GM12878 (cell line): ENCODE measurements at regions of chr11 and their contacts with region 1.

Region 1: GRCh38 chr11:120952461-120953434 is 71.2 kb upstream of the TBCEL start:
- DNase-seq: peak; percentile 26
- ATAC-seq: peak; percentile 91
- H3K4me3 ChIP-seq: no peak overlapping the region
- H3K27ac ChIP-seq: no peak overlapping the region
- H3K4me1 ChIP-seq: peaks cover 8% of the 10 kb centered on the region
- H3K27me3 ChIP-seq: no peaks in the 10 kb centered on the region; a peak in 1 of 4 replicates
- CTCF ChIP-seq: peak; percentile 80 to 96 (median 83)
- EP300 ChIP-seq: no peak
- POLR2A ChIP-seq: no peak
- RAD21 ChIP-seq: peak; percentile 97

Region 2: GRCh38 chr11:120523196-120523595 is 429.6 kb before region 1 on chr11:
- CTCF ChIA-PET with region 1: interaction called, 3 read pairs
- POLR2A ChIA-PET with region 1: no interaction called
- RAD21 ChIA-PET with region 1: no interaction called
- SMC1A ChIA-PET with region 1: no interaction called
- in situ Hi-C with region 1: loop called (anchors 5 kb)
- intact Hi-C with region 1: no loop called
- DNase-seq: no peak
- ATAC-seq: peak; percentile 51
- H3K4me3 ChIP-seq: no peak overlapping the region
- H3K27ac ChIP-seq: no peak overlapping the region
- H3K4me1 ChIP-seq: no peaks in the 10 kb centered on the region
- H3K27me3 ChIP-seq: peaks cover 0 to 1% of the 10 kb centered on the region in 2 experiments; a peak in 2 of 4 replicates
- CTCF ChIP-seq: no peak
- EP300 ChIP-seq: no peak
- POLR2A ChIP-seq: no peak
- RAD21 ChIP-seq: no peak

Region 3: GRCh38 chr11:120912504-120912903 is 40.2 kb before region 1 on chr11:
- CTCF ChIA-PET with region 1: interaction called, 24 read pairs
- POLR2A ChIA-PET with region 1: interaction called, 4 read pairs
- RAD21 ChIA-PET with region 1: no interaction called
- SMC1A ChIA-PET with region 1: interaction called, 8 read pairs
- in situ Hi-C with region 1: no loop called
- intact Hi-C with region 1: no loop called
- DNase-seq: no peak
- ATAC-seq: peak; percentile 51; the same call in 2 of the 3 replicates
- H3K4me3 ChIP-seq: no peak overlapping the region
- H3K27ac ChIP-seq: no peak overlapping the region
- H3K4me1 ChIP-seq: no peaks in the 10 kb centered on the region
- H3K27me3 ChIP-seq: no peaks in the 10 kb centered on the region
- CTCF ChIP-seq: peak; percentile 40 to 55 (median 47); a peak in 5 of 6 replicates
- EP300 ChIP-seq: no peak
- POLR2A ChIP-seq: no peak
- RAD21 ChIP-seq: peak; percentile 42

Region 4: DNA sequence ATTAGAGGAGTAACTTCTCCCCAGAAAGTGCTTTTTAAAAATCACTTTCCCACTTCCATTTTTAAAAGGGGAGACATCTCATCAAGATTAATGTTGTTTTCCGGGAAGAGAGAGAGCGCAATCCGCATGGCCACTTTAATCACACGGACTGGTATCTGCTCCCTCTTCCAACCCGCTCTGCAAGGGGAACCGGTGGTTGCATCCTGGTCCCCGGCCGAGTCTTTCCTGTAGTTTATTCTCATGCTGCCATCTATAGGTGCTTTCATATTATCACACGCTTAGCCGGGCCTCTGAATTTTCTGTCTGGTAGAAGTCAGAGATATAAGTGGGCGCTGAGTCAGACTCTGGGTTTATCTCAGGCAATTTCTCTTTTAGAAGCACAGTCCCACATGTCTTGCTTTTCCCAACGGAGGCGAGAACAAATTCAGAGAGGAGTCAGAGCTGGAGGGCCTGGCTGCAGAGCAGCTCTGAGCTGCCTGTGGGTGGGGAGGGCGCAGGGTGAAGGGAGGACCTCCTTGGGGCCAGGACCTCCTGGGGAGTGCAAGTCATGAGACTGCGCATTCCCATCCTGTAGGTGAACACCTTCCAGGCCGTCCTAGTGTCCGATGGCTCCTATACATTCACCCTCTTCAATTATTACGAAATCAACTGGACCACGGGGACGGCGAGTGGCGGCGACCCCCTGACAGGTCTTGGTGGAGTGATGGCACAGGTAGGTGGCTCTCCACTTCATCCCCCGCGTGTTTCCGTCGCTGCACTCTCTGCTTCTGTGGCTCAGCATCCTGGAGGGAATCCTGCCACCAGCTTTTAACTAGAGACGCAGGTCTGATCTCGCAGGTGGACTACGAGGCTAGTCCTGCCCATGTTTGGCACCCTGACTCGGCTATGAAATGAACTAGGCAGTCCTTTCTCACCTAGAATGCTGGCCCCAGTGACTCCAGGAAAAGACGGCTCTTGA is 160.0 kb after region 1 on chr11:
- CTCF ChIA-PET with region 1: interaction called, 4 read pairs
- POLR2A ChIA-PET with region 1: no interaction called
- RAD21 ChIA-PET with region 1: no interaction called
- SMC1A ChIA-PET with region 1: interaction called, 3 read pairs
- in situ Hi-C with region 1: no loop called
- intact Hi-C with region 1: loop called (anchors 1 kb)
- DNase-seq: no peak
- ATAC-seq: peak; percentile 95
- H3K4me3 ChIP-seq: no peak overlapping the region
- H3K27ac ChIP-seq: no peak overlapping the region
- H3K4me1 ChIP-seq: no peaks in the 10 kb centered on the region
- H3K27me3 ChIP-seq: peaks cover 0 to 12% of the 10 kb centered on the region in 2 experiments; a peak in 3 of 4 replicates
- CTCF ChIP-seq: peak; percentile 56 to 83 (median 66)
- EP300 ChIP-seq: no peak
- POLR2A ChIP-seq: no peak
- RAD21 ChIP-seq: peak; percentile 82